PC-3 (cell line): ENCODE measurements at regions of chr6 and their contacts with region 1.

Region 1: DNA sequence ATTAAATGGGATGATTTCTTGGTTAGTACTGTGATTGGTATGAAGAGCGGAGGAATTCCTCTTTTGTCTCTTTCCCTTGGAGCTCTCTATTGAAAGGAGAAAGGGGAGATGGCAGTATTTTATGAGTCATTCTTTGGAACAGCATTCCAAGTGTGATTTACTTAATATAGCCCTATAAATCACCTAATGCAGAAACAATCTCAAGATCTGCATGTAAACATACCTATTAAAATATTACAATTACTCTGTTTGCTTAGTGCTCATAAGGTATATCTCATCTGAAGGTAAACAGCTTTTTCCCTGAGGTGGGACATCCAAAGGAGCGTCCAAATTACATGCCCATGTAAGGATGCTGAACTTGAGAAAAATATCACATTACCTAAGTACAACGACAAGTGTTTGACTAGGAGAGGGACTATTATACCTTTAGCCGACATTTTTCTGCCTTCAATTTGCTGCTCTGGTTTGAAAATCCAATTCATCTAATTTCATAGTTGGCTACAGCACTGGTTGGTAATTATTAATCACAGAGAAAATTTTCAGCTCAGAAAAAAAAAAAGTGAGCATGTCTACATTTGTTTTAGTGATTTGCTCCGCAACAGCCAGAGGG is 229.0 kb downstream of the FOXC1 start:
- DNase-seq: peak; percentile 68
- ATAC-seq: peak; percentile 56
- H3K4me3 ChIP-seq: no peak overlapping the region
- H3K27ac ChIP-seq: no peak overlapping the region; the same call in 1 of the 2 replicates
- H3K4me1 ChIP-seq: peaks cover 42% of the 10 kb centered on the region
- H3K27me3 ChIP-seq: no peaks in the 10 kb centered on the region
- CTCF ChIP-seq: no peak

Region 2: GRCh38 chr6:1713016-1713600 is 125.6 kb before region 1 on chr6:
- CTCF ChIA-PET with region 1: no interaction called
- POLR2A ChIA-PET with region 1: no interaction called
- intact Hi-C with region 1: no loop called
- DNase-seq: no peak
- ATAC-seq: no peak
- H3K4me3 ChIP-seq: no peak overlapping the region
- H3K27ac ChIP-seq: no peak overlapping the region
- H3K4me1 ChIP-seq: no peaks in the 10 kb centered on the region
- H3K27me3 ChIP-seq: no peaks in the 10 kb centered on the region
- CTCF ChIP-seq: no peak

Region 3: DNA sequence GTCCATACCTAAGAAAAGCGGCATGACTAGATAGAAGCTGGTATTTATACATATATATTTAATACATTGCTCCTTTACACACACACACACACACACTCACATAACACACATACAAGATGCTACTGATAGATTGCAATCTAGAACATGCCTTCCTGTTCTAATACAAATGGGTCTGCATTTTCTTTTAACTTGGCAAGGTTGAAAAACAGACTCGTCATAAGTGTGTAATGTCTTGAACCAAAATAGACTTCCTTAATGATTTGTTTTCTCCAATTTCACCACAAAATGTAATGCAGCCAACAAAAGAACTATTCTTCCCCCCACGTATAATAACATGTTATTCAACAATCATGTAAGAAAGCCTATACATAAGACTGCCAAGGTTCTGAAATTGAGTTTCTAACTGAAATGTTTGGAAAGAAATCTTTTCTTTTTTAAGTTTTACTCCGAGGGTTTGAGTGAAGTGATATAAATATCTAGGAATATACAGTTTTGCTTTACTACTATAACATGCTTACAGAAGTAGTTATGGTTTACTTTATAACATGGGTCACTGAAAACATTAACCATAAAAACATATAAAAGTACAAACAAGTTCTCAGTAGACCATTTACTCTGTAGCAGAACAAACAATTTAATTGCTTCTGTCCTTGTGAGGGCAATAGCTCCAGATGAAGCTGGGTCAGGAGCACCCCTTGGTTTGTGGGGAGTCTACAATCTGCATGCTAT is 21.5 kb before region 1 on chr6:
- CTCF ChIA-PET with region 1: no interaction called
- POLR2A ChIA-PET with region 1: no interaction called
- intact Hi-C with region 1: loop called (anchors 2 kb)
- DNase-seq: no peak
- ATAC-seq: peak; percentile 64
- H3K4me3 ChIP-seq: no peak overlapping the region
- H3K27ac ChIP-seq: no peak overlapping the region
- H3K4me1 ChIP-seq: no peaks in the 10 kb centered on the region
- H3K27me3 ChIP-seq: no peaks in the 10 kb centered on the region
- CTCF ChIP-seq: no peak

Region 4: GRCh38 chr6:1893470-1894130 is 54.9 kb after region 1 on chr6:
- CTCF ChIA-PET with region 1: no interaction called
- POLR2A ChIA-PET with region 1: no interaction called
- intact Hi-C with region 1: loop called (anchors 2 kb)
- DNase-seq: peak; percentile 12
- ATAC-seq: no peak
- H3K4me3 ChIP-seq: no peak overlapping the region
- H3K27ac ChIP-seq: no peak overlapping the region
- H3K4me1 ChIP-seq: peaks cover 25% of the 10 kb centered on the region
- H3K27me3 ChIP-seq: no peaks in the 10 kb centered on the region
- CTCF ChIP-seq: peak; percentile 48